ENCODE measurements at regions of chr14 and their contacts with region 1.

Region 1: DNA sequence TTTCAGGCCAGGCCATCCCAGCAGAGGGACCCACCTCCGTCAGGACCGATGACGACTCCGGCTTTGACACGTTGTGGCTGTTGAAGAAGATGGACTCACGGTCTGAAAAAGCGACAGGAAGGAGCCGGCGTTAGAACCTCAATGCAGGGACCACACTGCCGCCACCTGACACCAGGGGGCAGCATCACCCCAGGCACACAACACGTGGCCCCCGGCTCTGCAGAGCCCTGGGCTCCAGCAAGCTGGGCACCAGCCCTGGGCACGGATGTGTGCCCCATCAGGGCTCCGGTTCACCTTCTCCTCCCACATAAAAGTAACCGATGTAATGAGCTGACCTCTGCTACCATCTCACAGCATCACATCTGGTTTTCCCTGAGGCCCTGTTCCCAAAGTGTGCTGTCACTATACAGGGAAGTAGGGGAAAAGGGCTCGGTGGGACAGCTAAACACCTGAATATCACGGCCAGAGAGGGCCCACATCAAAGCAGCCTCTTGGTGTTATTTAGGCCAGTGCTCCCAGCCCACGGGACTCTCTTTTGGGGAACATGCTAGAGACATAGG is 29.0 kb downstream of the CHGA start:
- DNase-seq: peak; percentile 59 to 92 (median 84)
- H3K4me3 ChIP-seq: no peak overlapping the region
- H3K27ac ChIP-seq: no peak overlapping the region
- H3K4me1 ChIP-seq: no peaks in the 10 kb centered on the region
- H3K27me3 ChIP-seq: no peaks in the 10 kb centered on the region
- CTCF ChIP-seq: peak; percentile 93 to 97 (median 96)
- POLR2A ChIP-seq: peak in 1 of 2 donors; percentile 13

Region 2: DNA sequence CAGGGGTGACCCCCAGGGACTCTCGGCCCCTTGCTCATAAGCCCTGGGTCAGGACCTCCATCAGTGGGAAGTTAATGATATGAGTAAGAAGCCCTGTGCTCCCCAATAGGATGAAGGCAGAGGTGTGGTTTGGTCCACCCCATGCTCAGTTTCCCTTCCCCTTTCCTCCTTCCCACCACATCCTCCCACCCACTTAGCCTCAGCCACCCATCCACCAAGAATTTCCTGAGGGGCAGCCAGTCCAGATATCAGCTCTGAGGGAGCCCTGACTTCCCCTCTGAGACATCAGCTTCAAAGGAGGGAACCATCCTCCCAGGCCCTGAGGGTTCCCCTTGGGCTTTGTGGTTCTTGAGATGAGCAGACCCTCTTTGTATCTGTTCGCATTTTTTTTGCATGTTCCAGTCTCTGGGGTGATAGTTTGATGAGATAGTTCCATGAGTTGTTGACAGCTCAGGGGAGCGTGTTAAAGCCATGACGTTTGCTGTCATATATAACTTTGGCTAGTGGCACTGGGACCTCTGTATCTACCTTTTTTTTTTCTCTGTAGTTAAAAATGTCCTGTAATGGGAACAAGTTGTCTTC is 274.8 kb before region 1 on chr14:
- intact Hi-C with region 1: no loop called
- DNase-seq: peak in 1 of 7 donors; percentile 31
- H3K4me3 ChIP-seq: no peak overlapping the region
- H3K27ac ChIP-seq: no peak overlapping the region
- H3K4me1 ChIP-seq: no peaks in the 10 kb centered on the region
- H3K27me3 ChIP-seq: no peaks in the 10 kb centered on the region
- CTCF ChIP-seq: no peak
- POLR2A ChIP-seq: no peak

Region 3: GRCh38 chr14:92832137-92832700 is 119.8 kb before region 1 on chr14:
- intact Hi-C with region 1: no loop called
- DNase-seq: no peak
- H3K4me3 ChIP-seq: no peak overlapping the region
- H3K27ac ChIP-seq: no peak overlapping the region
- H3K4me1 ChIP-seq: no peaks in the 10 kb centered on the region
- H3K27me3 ChIP-seq: no peaks in the 10 kb centered on the region
- CTCF ChIP-seq: no peak
- POLR2A ChIP-seq: no peak

Region 4: GRCh38 chr14:93103392-93104080 is 151.5 kb after region 1 on chr14:
- intact Hi-C with region 1: loop called in 1 of 2 experiments (anchors 10 kb)
- DNase-seq: peak in 3 of 7 donors; percentile 26 to 60 (median 33)
- H3K4me3 ChIP-seq: no peak overlapping the region
- H3K27ac ChIP-seq: peak overlapping the region in 1 of 5 donors; percentile 3
- H3K4me1 ChIP-seq: peaks cover 0 to 30% of the 10 kb centered on the region in 2 donors
- H3K27me3 ChIP-seq: no peaks in the 10 kb centered on the region
- CTCF ChIP-seq: no peak
- POLR2A ChIP-seq: no peak

Region 5: GRCh38 chr14:93137864-93138263 is 185.9 kb after region 1 on chr14:
- intact Hi-C with region 1: loop called (anchors 2 to 5 kb)
- DNase-seq: peak in 6 of 7 donors; percentile 30 to 68 (median 38)
- H3K4me3 ChIP-seq: no peak overlapping the region
- H3K27ac ChIP-seq: no peak overlapping the region
- H3K4me1 ChIP-seq: no peaks in the 10 kb centered on the region
- H3K27me3 ChIP-seq: no peaks in the 10 kb centered on the region
- CTCF ChIP-seq: no peak
- POLR2A ChIP-seq: no peak